Gastrocnemius medialis (tissue), 4 donors: ENCODE measurements at regions of chr10 and their contacts with region 1.

Region 1: GRCh38 chr10:23314835-23315239 is 29.8 kb downstream of the C10orf67 start:
- DNase-seq: peak in 1 of 2 donors; percentile 14
- ATAC-seq: peak in 1 of 2 donors; percentile 82
- H3K4me3 ChIP-seq: no peak overlapping the region
- H3K27ac ChIP-seq: no peak overlapping the region
- H3K4me1 ChIP-seq: no peaks in the 10 kb centered on the region
- H3K27me3 ChIP-seq: no peaks in the 10 kb centered on the region
- CTCF ChIP-seq: peak; percentile 68 to 83 (median 74)
- POLR2A ChIP-seq: no peak

Region 2: GRCh38 chr10:23399701-23400144 is 84.9 kb after region 1 on chr10:
- in situ Hi-C with region 1: no loop called
- intact Hi-C with region 1: no loop called
- DNase-seq: peak; percentile 89 to 94
- ATAC-seq: peak; percentile 96
- H3K4me3 ChIP-seq: no peak overlapping the region
- H3K27ac ChIP-seq: peak overlapping the region; percentile 74 to 86 (median 82)
- H3K4me1 ChIP-seq: peaks cover 26 to 37% of the 10 kb centered on the region in 2 donors
- H3K27me3 ChIP-seq: no peaks in the 10 kb centered on the region
- CTCF ChIP-seq: no peak
- POLR2A ChIP-seq: peak in 1 of 2 donors; percentile 48

Region 3: DNA sequence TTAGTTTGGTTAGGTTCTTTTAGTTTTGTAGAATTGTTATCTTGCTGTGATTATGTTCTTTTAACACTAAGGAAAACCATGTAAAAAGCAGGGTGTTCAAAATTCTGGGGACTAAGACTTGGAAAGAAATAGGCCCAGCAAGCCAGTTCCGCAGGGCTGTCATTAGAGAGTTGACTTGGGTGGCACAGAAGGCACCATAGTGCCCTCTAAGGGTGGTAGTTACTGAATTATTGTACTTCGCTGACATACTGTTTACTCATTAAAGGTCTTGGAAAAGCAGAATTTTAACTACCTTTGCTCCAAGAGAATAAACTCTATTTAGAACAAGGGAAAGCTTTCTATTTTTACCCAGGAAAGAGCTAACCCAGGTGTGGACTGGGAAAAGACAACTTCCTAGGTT is 210.6 kb after region 1 on chr10:
- in situ Hi-C with region 1: loop called (anchors 5 kb)
- intact Hi-C with region 1: loop called (anchors 1 kb)
- DNase-seq: peak in 1 of 2 donors; percentile 19
- ATAC-seq: peak; percentile 93 to 97
- H3K4me3 ChIP-seq: no peak overlapping the region
- H3K27ac ChIP-seq: no peak overlapping the region
- H3K4me1 ChIP-seq: no peaks in the 10 kb centered on the region
- H3K27me3 ChIP-seq: no peaks in the 10 kb centered on the region
- CTCF ChIP-seq: peak; percentile 41 to 68 (median 61)
- POLR2A ChIP-seq: no peak

Region 4: DNA sequence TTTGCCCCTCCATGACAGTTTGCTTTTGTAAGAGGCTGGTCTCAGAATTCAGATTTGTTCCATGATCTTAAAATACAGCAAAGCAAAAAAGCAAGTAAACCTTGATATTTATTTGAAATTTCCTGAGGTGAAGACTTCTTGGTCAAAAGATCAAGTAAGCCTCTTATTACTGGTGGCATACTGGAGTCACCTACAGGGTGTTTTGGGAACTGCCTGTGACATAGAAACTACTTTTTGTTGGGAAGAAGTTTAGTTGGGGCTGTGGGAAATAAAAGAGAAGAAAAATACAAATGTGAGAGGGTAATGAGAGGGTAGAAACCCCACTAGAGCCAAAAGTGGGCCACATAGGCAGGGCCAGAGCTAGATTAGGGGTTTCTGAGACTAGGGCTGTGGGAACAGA is 341.9 kb after region 1 on chr10:
- in situ Hi-C with region 1: loop called in 1 of 4 experiments (anchors 10 kb)
- intact Hi-C with region 1: no loop called
- DNase-seq: no peak
- ATAC-seq: no peak
- H3K4me3 ChIP-seq: no peak overlapping the region
- H3K27ac ChIP-seq: no peak overlapping the region
- H3K4me1 ChIP-seq: no peaks in the 10 kb centered on the region
- H3K27me3 ChIP-seq: no peaks in the 10 kb centered on the region
- CTCF ChIP-seq: peak in 1 of 5 experiments; percentile 11
- POLR2A ChIP-seq: no peak

Region 5: DNA sequence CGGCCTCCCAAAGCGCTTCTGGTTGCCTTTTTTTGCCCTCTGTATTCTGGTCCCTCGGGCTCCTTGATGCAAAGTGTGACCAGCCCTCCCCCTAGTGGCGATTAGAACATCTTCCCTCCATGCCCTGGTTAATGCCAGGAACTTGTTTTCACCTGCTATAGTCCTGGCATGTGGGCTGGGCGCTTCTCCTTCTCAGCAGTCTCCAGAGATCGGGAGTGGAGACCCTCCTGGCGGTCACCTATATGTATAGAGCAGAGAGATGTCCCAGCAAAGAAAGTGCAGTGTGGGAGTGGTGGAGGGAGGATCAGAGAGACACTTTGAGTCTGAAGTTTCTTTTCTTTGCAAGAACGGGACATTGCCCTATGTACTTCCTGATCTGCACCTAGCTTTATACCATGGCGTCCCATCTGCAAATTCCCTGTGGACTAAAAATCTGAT is 388.2 kb after region 1 on chr10:
- in situ Hi-C with region 1: loop called in 2 of 4 experiments (anchors 25 kb)
- intact Hi-C with region 1: loop called (anchors 5 kb)
- DNase-seq: peak in 1 of 2 donors; percentile 21
- ATAC-seq: peak in 1 of 2 donors; percentile 78
- H3K4me3 ChIP-seq: no peak overlapping the region
- H3K27ac ChIP-seq: no peak overlapping the region
- H3K4me1 ChIP-seq: no peaks in the 10 kb centered on the region
- H3K27me3 ChIP-seq: peaks cover 0 to 3% (median under 1%) of the 10 kb centered on the region in 3 donors
- CTCF ChIP-seq: peak; percentile 23 to 66 (median 51)
- POLR2A ChIP-seq: no peak

Region 6: GRCh38 chr10:24556750-24557742 is 1242.2 kb after region 1 on chr10:
- in situ Hi-C with region 1: loop called in 1 of 4 experiments (anchors 25 kb)
- intact Hi-C with region 1: no loop called
- DNase-seq: no peak
- ATAC-seq: peak in 1 of 2 donors; percentile 45
- H3K4me3 ChIP-seq: no peak overlapping the region
- H3K27ac ChIP-seq: no peak overlapping the region
- H3K4me1 ChIP-seq: peaks cover 24 to 32% of the 10 kb centered on the region in 2 donors
- H3K27me3 ChIP-seq: no peaks in the 10 kb centered on the region
- CTCF ChIP-seq: peak; percentile 58 to 73 (median 63)
- POLR2A ChIP-seq: no peak